ENCODE measurements at regions of chr2 and their contacts with region 1.

Region 1: DNA sequence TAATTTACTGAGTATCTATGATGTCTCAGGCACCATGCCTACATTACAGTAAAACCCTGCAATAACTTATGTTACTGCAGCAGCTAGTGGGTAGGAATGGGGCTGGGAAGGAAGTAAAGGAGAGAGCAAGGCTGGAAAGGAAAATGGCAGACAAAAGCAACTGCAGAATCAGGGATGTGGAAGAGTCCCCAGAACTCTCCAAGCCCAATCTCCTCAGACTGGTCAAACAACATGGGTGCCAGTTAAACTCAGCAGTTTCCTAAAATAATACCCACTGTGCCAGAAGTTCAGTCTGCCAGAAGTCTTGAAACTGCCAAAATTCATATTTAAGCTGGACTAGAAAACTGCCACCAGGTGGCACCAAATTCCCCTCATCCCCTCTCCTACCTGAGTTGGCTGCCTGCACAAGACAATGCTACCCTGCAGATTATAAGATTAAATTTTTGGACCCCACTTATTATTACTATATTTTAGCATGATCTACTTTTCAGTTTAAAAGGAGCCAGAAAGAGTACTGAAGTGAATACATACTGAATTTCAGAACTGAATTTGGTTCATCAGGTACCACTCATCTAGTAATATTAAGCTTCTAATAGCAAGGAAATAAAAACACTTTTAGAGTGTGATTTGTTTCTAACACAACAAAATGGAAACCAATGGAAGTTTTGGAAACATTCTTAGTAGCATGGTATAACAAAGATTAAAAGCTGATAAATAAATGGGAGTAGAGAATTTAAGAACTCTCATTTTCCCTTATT is 86.8 kb upstream of the DNER start:
- DNase-seq: peak; percentile 23
- ATAC-seq: peak; percentile 91
- H3K4me3 ChIP-seq: no peak overlapping the region
- H3K27ac ChIP-seq: no peak overlapping the region
- H3K4me1 ChIP-seq: no peaks in the 10 kb centered on the region
- H3K27me3 ChIP-seq: no peaks in the 10 kb centered on the region
- CTCF ChIP-seq: peak; percentile 60 to 79 (median 78)
- EP300 ChIP-seq: no peak
- POLR2A ChIP-seq: no peak
- RAD21 ChIP-seq: peak; percentile 81

Region 2: DNA sequence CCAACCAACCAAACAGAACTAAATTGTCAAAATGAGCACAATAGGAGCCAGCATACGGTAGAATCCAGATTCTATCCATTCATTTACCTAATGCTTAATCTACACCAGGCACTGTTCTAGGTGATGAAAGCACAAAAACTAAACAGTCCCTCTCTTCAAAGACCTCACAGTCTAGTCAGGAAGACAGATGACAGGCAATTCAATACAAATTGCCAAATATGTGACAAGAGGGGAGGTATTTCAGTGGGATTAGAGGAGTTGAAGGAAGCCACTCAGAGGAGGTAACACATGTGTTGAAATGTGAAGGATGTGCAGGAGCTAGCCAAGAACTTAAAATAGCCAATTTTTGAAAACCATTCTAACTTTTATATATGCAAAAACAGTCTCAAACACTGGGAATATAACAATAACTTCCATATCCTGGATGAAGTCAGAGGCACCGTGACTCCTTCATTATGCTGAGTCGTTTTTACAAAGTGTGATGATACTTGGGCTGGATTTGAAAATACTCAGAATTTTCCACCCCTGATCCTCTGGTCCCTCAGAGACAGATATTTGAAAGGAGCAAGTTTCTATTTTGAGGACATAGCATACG is 735.0 kb before region 1 on chr2:
- CTCF ChIA-PET with region 1: no interaction called
- POLR2A ChIA-PET with region 1: no interaction called
- RAD21 ChIA-PET with region 1: no interaction called
- SMC1A ChIA-PET with region 1: no interaction called
- in situ Hi-C with region 1: no loop called
- intact Hi-C with region 1: no loop called
- DNase-seq: no peak
- ATAC-seq: no peak
- H3K4me3 ChIP-seq: no peak overlapping the region
- H3K27ac ChIP-seq: no peak overlapping the region
- H3K4me1 ChIP-seq: no peaks in the 10 kb centered on the region
- H3K27me3 ChIP-seq: no peaks in the 10 kb centered on the region
- CTCF ChIP-seq: no peak
- EP300 ChIP-seq: no peak
- POLR2A ChIP-seq: no peak
- RAD21 ChIP-seq: no peak

Region 3: DNA sequence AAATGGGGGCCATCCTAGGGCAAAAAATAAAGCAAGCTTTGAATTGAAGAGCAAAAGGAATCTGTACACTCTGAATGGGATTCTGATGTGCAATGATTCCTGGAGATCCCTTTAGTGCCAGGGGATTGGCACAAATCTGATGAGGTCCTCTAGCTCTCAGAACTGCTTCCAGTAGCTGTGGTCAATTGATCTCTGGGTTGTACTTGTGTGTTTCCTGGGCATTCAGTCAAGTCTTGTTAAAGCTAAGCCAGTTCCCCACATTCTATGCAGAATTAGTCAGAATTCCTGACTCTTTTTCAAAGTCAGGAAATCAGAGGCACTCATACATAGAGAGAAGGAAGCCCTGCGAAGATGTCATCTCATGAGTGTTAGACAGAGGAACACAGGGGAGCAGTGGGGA is 248.1 kb before region 1 on chr2:
- CTCF ChIA-PET with region 1: no interaction called
- POLR2A ChIA-PET with region 1: no interaction called
- RAD21 ChIA-PET with region 1: no interaction called
- SMC1A ChIA-PET with region 1: no interaction called
- in situ Hi-C with region 1: no loop called
- intact Hi-C with region 1: no loop called
- DNase-seq: no peak
- ATAC-seq: no peak
- H3K4me3 ChIP-seq: no peak overlapping the region
- H3K27ac ChIP-seq: no peak overlapping the region
- H3K4me1 ChIP-seq: no peaks in the 10 kb centered on the region
- H3K27me3 ChIP-seq: no peaks in the 10 kb centered on the region
- CTCF ChIP-seq: no peak
- EP300 ChIP-seq: no peak
- POLR2A ChIP-seq: no peak
- RAD21 ChIP-seq: no peak

Region 4: DNA sequence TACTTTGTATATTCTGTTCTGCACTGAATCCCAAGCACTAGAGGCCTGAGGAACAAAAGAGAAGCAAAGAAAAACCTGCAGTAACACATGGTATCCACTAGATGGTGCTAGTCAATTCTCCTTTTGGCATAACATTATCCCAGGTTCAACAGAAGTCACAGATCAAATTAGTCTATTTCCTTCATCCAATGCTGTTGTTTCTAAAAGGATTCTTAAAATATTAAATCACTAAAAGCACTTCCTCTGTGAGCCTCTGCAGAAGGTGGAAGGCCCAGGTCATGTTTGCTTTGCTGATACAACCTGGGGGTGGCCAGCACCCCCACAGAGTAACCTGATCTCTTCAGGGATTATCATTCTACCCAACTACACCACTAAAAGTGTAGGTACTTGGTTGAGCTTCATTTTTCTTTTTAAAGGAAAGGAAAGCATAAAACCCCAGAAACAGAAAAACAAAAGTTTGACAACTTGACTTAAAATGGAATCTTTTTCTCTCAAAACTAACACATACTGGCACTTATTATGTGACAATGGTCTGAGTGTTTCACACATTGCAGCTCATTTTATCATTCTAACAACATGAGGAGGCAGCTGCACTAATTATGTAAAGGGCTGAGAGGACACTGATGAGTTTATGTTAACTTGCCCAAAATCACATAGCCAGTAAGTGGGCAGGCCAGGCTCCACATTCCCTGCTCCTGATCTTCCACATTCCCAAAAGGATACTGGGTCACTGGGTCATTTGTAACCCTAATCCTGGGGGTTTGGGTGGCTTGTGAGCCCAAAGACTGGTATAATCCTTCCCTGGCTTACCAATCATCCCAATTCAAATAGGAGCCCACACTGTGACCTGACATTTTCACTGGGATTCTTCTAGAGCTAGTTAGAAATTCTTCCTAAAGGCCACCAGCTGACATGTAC is 20.1 kb before region 1 on chr2:
- CTCF ChIA-PET with region 1: interaction called, 15 read pairs
- POLR2A ChIA-PET with region 1: no interaction called
- RAD21 ChIA-PET with region 1: no interaction called
- SMC1A ChIA-PET with region 1: interaction called, 5 read pairs
- in situ Hi-C with region 1: no loop called
- intact Hi-C with region 1: no loop called
- DNase-seq: no peak
- ATAC-seq: peak; percentile 82
- H3K4me3 ChIP-seq: no peak overlapping the region
- H3K27ac ChIP-seq: no peak overlapping the region
- H3K4me1 ChIP-seq: peaks cover 20% of the 10 kb centered on the region
- H3K27me3 ChIP-seq: no peaks in the 10 kb centered on the region
- CTCF ChIP-seq: peak; percentile 81 to 91 (median 84)
- EP300 ChIP-seq: no peak
- POLR2A ChIP-seq: no peak
- RAD21 ChIP-seq: peak; percentile 63

Region 5: DNA sequence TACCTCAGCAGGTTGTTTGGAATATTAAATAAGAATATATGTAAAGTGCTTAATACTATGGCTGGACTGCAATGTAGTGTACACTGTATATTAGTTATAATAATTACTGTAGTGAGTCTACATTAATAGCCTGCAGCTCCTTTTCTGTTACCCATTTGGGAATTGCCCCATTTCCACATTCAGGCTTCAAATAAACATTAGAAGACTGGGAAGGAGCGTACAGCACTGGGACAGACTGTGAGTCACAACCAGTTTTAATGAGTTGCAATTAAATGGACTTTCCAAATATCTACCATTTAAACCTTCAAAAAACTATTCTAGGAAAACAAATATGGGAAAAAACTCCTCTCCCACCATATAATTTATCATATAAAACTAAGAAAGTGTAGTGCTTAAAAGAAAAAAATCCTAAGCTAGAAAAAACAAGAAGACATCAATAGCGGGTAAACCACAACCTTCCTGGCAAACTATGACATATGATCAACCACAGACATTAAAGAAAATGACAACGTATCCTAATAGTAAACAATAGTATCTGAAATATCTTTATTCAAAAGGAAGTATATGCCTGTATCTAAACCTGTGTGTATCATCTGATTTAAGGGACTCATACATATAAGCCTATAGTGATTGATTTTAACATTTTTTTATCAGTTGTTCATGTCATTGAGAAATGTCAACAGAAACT is 34.6 kb after region 1 on chr2:
- CTCF ChIA-PET with region 1: interaction called, 10 read pairs
- POLR2A ChIA-PET with region 1: no interaction called
- RAD21 ChIA-PET with region 1: no interaction called
- SMC1A ChIA-PET with region 1: interaction called, 8 read pairs
- in situ Hi-C with region 1: no loop called
- intact Hi-C with region 1: no loop called
- DNase-seq: no peak
- ATAC-seq: no peak
- H3K4me3 ChIP-seq: no peak overlapping the region
- H3K27ac ChIP-seq: no peak overlapping the region
- H3K4me1 ChIP-seq: no peaks in the 10 kb centered on the region; the same call in 1 of the 2 replicates
- H3K27me3 ChIP-seq: no peaks in the 10 kb centered on the region
- CTCF ChIP-seq: no peak
- EP300 ChIP-seq: no peak
- POLR2A ChIP-seq: no peak
- RAD21 ChIP-seq: no peak

Region 6: DNA sequence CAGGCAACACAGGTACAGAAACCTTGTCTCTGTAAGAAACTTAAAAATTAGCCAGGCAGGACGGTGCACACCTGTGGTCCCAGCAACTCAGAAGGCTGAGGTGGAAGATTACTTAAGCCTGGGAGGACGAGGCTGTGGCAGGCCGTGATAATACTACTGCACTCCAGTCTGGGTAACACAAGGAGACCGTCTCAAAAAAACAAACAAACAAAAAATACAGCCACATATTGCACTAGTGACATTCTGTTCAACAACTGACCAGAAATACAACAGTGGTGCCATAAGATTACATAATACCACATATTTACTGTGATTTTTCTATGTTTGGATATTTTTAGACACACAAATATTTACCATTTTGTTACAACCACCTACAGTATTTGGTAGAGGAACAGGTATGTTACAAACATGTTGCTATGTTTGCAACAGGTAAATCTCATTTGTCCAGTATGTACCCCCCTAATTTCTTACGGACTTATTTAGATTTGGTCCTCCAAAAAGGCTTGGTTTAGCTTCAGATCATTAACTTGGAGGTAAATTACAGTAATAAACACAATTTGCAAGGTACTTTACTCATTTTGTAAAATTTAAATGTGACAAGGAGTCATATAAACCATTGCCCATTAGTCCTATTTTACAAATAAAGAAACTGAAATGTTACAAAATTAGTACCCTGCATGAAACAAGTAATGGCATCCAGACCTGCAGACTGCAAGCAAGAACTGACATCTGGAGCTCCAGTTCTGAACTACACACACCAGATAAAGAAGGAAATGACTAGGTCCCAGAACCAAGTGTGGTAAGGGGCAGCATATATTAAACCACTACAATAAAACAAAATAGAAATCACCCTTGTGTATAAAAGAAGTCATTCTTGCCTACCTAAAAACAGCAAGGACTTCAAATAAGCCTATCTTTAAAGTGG is 83.9 kb after region 1 on chr2:
- CTCF ChIA-PET with region 1: interaction called, 22 read pairs
- POLR2A ChIA-PET with region 1: no interaction called
- RAD21 ChIA-PET with region 1: interaction called, 5 read pairs
- SMC1A ChIA-PET with region 1: interaction called, 8 read pairs
- in situ Hi-C with region 1: no loop called
- intact Hi-C with region 1: no loop called
- DNase-seq: no peak
- ATAC-seq: peak; percentile 75
- H3K4me3 ChIP-seq: no peak overlapping the region
- H3K27ac ChIP-seq: peak overlapping the region; percentile 15; the same call in 1 of the 2 replicates
- H3K4me1 ChIP-seq: peaks cover 18% of the 10 kb centered on the region; the same call in 1 of the 2 replicates
- H3K27me3 ChIP-seq: no peaks in the 10 kb centered on the region
- CTCF ChIP-seq: peak in 2 of 3 experiments; percentile 4 to 28; a peak in 2 of 6 replicates
- EP300 ChIP-seq: no peak
- POLR2A ChIP-seq: no peak
- RAD21 ChIP-seq: peak; percentile 65

Region 7: DNA sequence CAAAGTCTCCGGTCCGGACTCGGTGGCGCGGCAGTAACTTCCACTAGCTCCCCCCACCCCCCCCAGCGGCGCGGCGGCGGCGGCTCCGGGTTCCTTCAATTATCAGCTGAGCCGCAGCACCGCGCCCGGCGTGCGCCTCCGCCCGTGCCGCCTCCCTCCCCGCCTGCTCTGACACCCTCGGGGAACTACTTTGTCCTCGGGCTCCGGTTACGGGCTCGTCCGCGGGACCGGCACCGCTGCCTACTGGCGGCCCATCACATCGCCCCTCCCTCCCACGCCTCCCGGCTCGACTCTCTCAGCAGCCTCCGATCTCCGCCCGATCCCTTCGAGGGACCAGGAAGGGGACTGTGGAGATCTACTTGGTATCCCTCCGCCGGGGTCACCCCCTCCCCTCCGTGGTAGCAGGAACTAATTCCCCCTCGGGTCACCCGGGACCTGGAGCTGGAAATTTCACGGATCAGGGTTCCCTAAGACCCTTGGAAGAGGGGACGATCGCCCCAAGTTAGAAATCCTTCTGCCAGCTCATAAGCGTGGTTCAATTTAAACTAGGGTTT is 120.8 kb after region 1 on chr2 and contains the start of gene TRIP12:
- CTCF ChIA-PET with region 1: interaction called, 11 read pairs
- POLR2A ChIA-PET with region 1: no interaction called
- RAD21 ChIA-PET with region 1: interaction called, 6 read pairs
- SMC1A ChIA-PET with region 1: interaction called, 5 read pairs
- in situ Hi-C with region 1: no loop called
- intact Hi-C with region 1: no loop called
- DNase-seq: peak; percentile 88
- ATAC-seq: peak; percentile 84
- H3K4me3 ChIP-seq: peak within 1 kb of the TSS; percentile 83
- H3K27ac ChIP-seq: peak within 1 kb of the TSS; percentile 98
- H3K4me1 ChIP-seq: no peaks in the 10 kb centered on the region
- H3K27me3 ChIP-seq: no peaks in the 10 kb centered on the region
- CTCF ChIP-seq: no peak
- EP300 ChIP-seq: peak in 1 of 2 experiments; percentile 26; a peak in 1 of 4 replicates
- POLR2A ChIP-seq: peak; percentile 63
- RAD21 ChIP-seq: no peak
- polyA plus RNA-seq, gene TRIP12: 23.1 to 23.9 TPM

Region 8: GRCh38 chr2:230068016-230068650 is 267.0 kb after region 1 on chr2:
- CTCF ChIA-PET with region 1: interaction called, 6 read pairs
- POLR2A ChIA-PET with region 1: no interaction called
- RAD21 ChIA-PET with region 1: interaction called, 4 read pairs
- SMC1A ChIA-PET with region 1: no interaction called
- in situ Hi-C with region 1: no loop called
- intact Hi-C with region 1: loop called (anchors 10 kb)
- DNase-seq: no peak
- ATAC-seq: peak; percentile 66
- H3K4me3 ChIP-seq: peak overlapping the region; percentile 82
- H3K27ac ChIP-seq: peak overlapping the region; percentile 56; the same call in 1 of the 2 replicates
- H3K4me1 ChIP-seq: peaks cover 5% of the 10 kb centered on the region
- H3K27me3 ChIP-seq: peaks cover 0 to 2% of the 10 kb centered on the region in 2 experiments; a peak in 1 of 4 replicates
- CTCF ChIP-seq: peak; percentile 2 to 15 (median 12); a peak in 1 of 6 replicates
- EP300 ChIP-seq: no peak
- POLR2A ChIP-seq: peak; percentile 48
- RAD21 ChIP-seq: no peak